Activated CD4-positive, alpha-beta T cell treated with anti-CD3 and anti-CD28 coated beads, Interleukin-2, amount 10 ng/mL, durations not matched to agents 24 days and 14 days (primary cell): ENCODE measurements at regions of chr3 and their contacts with region 1.

Region 1: GRCh38 chr3:105827959-105828358 is 40.9 kb downstream of the CBLB start:
- DNase-seq: peak; percentile 68
- H3K4me3 Mint-ChIP-seq: peak overlapping the region; percentile 60
- H3K27ac Mint-ChIP-seq: peak overlapping the region; percentile 100
- H3K4me1 Mint-ChIP-seq: peaks cover 73% of the 10 kb centered on the region
- H3K27me3 Mint-ChIP-seq: no peaks in the 10 kb centered on the region

Region 2: GRCh38 chr3:105686278-105686897 is 141.6 kb before region 1 on chr3:
- intact Hi-C with region 1: loop called (anchors 2 kb)
- DNase-seq: peak; percentile 53
- H3K4me3 Mint-ChIP-seq: no peak overlapping the region
- H3K27ac Mint-ChIP-seq: peak overlapping the region; percentile 67
- H3K4me1 Mint-ChIP-seq: peaks cover 18% of the 10 kb centered on the region
- H3K27me3 Mint-ChIP-seq: no peaks in the 10 kb centered on the region

Region 3: DNA sequence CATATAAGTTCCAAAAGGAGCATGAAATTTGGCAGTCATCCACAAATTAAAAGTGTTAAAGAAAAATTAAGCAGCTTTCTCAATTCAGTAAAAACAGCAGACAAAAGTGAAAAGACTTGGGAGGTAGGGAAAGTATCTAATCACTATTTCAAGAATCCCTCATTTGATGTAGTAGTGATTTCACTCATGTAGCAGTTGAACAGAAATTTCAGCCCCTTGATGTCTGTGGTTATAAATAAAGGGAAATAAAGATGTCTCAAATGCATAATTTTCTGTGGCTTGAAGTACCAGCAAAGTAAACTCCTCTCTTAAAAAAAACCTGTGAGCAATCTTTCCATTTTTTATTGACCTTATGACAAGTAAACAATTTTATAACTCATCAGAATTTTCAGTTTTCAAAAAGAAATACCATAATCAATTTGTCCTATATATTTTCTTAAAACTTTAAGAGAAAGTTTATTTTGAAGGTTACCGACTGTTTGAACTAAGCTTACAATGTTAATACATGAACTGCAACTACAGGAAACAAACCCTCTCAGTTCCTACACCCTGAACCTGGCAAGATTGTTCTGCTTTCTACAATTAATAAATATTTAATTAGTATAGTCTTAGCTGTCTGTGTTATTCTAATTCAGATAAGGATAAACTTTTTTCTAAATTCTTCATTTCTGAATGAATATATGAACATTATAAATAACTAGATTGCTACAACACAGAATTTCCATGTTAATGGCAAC is 53.3 kb before region 1 on chr3:
- intact Hi-C with region 1: loop called (anchors 1 kb)
- DNase-seq: no peak
- H3K4me3 Mint-ChIP-seq: no peak overlapping the region
- H3K27ac Mint-ChIP-seq: peak overlapping the region; percentile 78
- H3K4me1 Mint-ChIP-seq: peaks cover 65% of the 10 kb centered on the region
- H3K27me3 Mint-ChIP-seq: no peaks in the 10 kb centered on the region

Region 4: DNA sequence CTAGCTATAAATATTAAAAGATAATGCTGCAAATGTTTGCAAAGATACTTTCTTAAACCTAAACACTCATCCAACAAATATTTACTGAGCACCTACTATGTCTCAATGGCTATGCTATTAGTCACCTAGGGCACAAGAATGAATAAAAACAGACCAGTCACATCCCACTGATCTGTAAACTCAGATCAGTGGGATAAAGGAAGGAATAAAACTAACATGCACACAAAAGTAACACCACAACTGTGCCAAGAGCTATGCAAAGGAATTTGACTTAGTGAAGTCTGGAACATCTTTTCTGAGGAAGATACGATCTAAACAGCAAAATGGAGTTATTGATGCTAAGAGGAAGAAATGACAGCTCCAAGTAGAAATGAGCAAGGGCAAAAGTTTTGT is 15.8 kb before region 1 on chr3:
- intact Hi-C with region 1: no loop called
- DNase-seq: no peak
- H3K4me3 Mint-ChIP-seq: no peak overlapping the region
- H3K27ac Mint-ChIP-seq: peak overlapping the region; percentile 64
- H3K4me1 Mint-ChIP-seq: peaks cover 43% of the 10 kb centered on the region
- H3K27me3 Mint-ChIP-seq: no peaks in the 10 kb centered on the region

Region 5: DNA sequence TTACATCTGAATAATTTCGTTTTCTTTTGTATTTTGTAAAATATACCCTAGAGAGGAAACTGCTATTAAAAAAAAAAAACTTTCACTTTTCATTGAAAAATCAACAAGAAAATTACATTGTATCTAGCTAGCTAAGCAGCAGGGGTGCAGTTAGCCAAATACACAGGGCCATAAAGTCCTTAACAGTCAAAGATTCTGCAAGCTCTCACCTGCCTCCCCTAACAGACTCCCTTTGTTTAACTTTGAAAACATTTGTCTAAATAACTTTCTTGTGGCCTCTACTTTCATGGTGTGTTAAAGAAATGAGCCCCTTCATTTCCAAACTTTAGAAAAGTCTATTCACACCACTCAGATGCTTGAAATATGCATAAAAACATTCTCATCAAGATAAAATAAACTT is 17.5 kb after region 1 on chr3:
- intact Hi-C with region 1: loop called (anchors 2 kb)
- DNase-seq: no peak
- H3K4me3 Mint-ChIP-seq: no peak overlapping the region
- H3K27ac Mint-ChIP-seq: no peak overlapping the region
- H3K4me1 Mint-ChIP-seq: peaks cover 47% of the 10 kb centered on the region
- H3K27me3 Mint-ChIP-seq: no peaks in the 10 kb centered on the region

Region 6: GRCh38 chr3:106423321-106424225 is 595.6 kb after region 1 on chr3:
- intact Hi-C with region 1: loop called (anchors 1 kb)
- DNase-seq: no peak
- H3K4me3 Mint-ChIP-seq: peak overlapping the region; percentile 13
- H3K27ac Mint-ChIP-seq: peak overlapping the region; percentile 85
- H3K4me1 Mint-ChIP-seq: peaks cover 43% of the 10 kb centered on the region
- H3K27me3 Mint-ChIP-seq: no peaks in the 10 kb centered on the region

Region 7: GRCh38 chr3:106473576-106474475 is 645.9 kb after region 1 on chr3:
- intact Hi-C with region 1: loop called (anchors 1 kb)
- DNase-seq: no peak
- H3K4me3 Mint-ChIP-seq: no peak overlapping the region
- H3K27ac Mint-ChIP-seq: peak overlapping the region; percentile 83
- H3K4me1 Mint-ChIP-seq: peaks cover 8% of the 10 kb centered on the region
- H3K27me3 Mint-ChIP-seq: no peaks in the 10 kb centered on the region